Caco-2 (cell line): ENCODE measurements at regions of chr20 and their contacts with region 1.

Region 1: GRCh38 chr20:38472513-38473372 is at the start of gene RALGAPB:
- DNase-seq: peak; percentile 100
- H3K4me3 ChIP-seq: peak within 1 kb of the TSS; percentile 78
- H3K4me3 Mint-ChIP-seq: peak within 1 kb of the TSS; percentile 80
- H3K27ac Mint-ChIP-seq: peak within 1 kb of the TSS; percentile 54
- H3K4me1 ChIP-seq: peaks cover 15% of the 10 kb centered on the region
- H3K4me1 Mint-ChIP-seq: peaks cover 27% of the 10 kb centered on the region
- H3K27me3 ChIP-seq: no peaks in the 10 kb centered on the region
- H3K27me3 Mint-ChIP-seq: no peaks in the 10 kb centered on the region
- CTCF ChIP-seq: peak; percentile 86 to 92
- total RNA-seq, gene RALGAPB: 69.1 and 72.3 TPM in 2 replicates

Region 2: DNA sequence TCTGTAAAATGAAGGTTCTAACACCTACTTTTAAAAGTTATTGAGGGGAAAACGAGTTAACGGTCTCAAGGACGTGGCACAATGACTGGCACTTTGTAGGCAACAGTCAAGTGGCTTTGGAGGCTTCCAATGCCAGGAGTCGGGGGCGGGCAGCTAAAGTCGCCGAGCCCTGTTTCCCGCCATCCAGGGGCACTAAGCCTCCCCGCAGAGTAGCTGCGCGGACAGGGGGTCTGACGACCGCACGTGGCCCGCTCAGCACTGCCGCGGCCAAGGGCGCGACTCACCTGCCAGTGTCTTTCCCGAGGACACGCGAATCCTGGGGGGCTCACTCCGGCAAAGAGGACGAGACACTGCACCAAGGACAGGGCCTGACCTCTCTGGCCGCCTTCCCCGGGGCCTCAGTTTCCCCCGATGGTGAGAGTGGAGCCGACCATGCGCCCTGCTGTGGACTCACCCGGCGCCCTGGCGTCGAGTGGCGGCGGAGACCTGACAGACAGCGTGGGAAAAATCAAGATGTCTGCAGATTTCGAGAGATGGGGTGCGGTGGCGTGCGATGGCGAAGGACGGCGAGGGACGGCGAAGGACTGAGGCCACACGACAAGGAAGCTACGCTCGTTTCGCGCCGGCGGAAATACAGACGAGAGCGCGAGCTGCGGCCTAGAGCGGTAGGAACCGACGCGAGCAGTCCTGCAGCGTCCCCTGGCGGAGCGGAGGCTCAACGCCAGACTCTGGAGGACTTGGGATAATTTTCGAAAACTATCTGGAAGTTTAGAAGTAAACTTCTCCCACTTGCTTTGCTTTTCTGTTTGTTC is 37.8 kb before region 1 on chr20 and contains the start of gene SNHG17:
- CTCF ChIA-PET with region 1: interaction called, 68 read pairs
- POLR2A ChIA-PET with region 1: interaction called, 104 read pairs
- intact Hi-C with region 1: loop called (anchors 1 kb)
- DNase-seq: peak; percentile 97
- H3K4me3 ChIP-seq: peak within 1 kb of the TSS; percentile 73
- H3K4me3 Mint-ChIP-seq: peak within 1 kb of the TSS; percentile 94
- H3K27ac Mint-ChIP-seq: peak within 1 kb of the TSS; percentile 95
- H3K4me1 ChIP-seq: peaks cover 10% of the 10 kb centered on the region
- H3K4me1 Mint-ChIP-seq: peaks cover 16% of the 10 kb centered on the region
- H3K27me3 ChIP-seq: no peaks in the 10 kb centered on the region
- H3K27me3 Mint-ChIP-seq: peaks cover 6% of the 10 kb centered on the region
- CTCF ChIP-seq: peak; percentile 100
- total RNA-seq, gene SNHG17: 351 and 362 TPM in 2 replicates

Region 3: GRCh38 chr20:38446441-38447209 is 26.1 kb before region 1 on chr20:
- CTCF ChIA-PET with region 1: interaction called, 73 read pairs
- POLR2A ChIA-PET with region 1: interaction called, 56 read pairs
- intact Hi-C with region 1: loop called (anchors 1 kb)
- DNase-seq: peak; percentile 96 to 100
- H3K4me3 ChIP-seq: peak overlapping the region; percentile 70
- H3K4me3 Mint-ChIP-seq: peak overlapping the region; percentile 81
- H3K27ac Mint-ChIP-seq: peak overlapping the region; percentile 63
- H3K4me1 ChIP-seq: peaks cover 14% of the 10 kb centered on the region
- H3K4me1 Mint-ChIP-seq: peaks cover 19% of the 10 kb centered on the region
- H3K27me3 ChIP-seq: no peaks in the 10 kb centered on the region
- H3K27me3 Mint-ChIP-seq: peaks cover 6% of the 10 kb centered on the region
- CTCF ChIP-seq: peak; percentile 99 to 100

Region 4: DNA sequence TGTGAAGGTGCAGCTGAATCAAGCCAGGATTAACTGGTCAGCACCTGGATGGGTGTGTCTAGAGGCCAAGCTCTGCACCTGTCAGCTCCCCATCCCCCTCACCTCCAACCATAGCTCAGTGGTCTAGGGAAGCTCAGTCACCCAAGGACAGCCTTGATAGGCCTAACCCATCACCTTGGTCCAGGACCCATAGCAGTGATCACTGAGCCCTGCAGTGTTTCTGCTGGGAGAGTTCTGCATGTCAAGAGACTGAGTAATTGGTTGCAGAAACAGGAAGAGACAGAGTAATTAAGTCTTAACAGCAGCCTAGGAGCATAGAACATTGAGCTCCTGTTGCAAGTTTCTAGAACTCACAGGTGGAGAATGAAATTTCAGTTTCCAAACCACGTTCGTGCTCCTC is 18.8 kb before region 1 on chr20:
- CTCF ChIA-PET with region 1: interaction called, 15 read pairs
- POLR2A ChIA-PET with region 1: interaction called, 7 read pairs
- intact Hi-C with region 1: no loop called
- DNase-seq: peak in 1 of 2 experiments; percentile 38
- H3K4me3 ChIP-seq: no peak overlapping the region
- H3K4me3 Mint-ChIP-seq: no peak overlapping the region
- H3K27ac Mint-ChIP-seq: no peak overlapping the region
- H3K4me1 ChIP-seq: no peaks in the 10 kb centered on the region
- H3K4me1 Mint-ChIP-seq: no peaks in the 10 kb centered on the region
- H3K27me3 ChIP-seq: no peaks in the 10 kb centered on the region
- H3K27me3 Mint-ChIP-seq: peaks cover 4% of the 10 kb centered on the region
- CTCF ChIP-seq: no peak

Region 5: DNA sequence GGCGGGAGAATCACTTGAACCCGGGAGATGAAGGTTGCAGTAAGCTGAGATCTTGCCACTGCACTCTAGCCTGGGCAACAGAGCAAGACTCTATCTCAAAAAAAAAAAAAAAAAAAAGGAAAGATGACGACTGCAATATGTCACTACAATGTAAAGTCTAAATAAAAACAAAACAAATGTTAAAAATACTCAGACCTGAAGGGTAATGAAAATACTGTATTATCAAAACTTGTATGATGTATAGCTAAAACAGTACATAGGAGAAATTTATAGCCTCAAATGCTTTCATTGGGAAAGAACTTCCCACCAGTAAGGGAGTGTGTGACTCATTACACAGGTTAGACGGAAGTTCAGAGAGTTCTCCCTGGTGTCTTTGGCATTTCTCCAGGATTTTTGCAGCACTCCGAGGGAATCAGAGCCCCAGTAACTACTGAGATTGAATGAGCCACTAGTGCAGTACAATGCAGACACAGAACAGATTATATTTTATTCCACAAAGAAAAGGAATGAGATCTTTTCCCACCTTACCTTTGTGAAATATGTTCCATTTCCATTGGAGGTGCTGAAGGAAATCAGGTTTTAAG is 12.6 kb before region 1 on chr20:
- CTCF ChIA-PET with region 1: interaction called, 15 read pairs
- POLR2A ChIA-PET with region 1: interaction called, 7 read pairs
- intact Hi-C with region 1: no loop called
- DNase-seq: peak in 1 of 2 experiments; percentile 47
- H3K4me3 ChIP-seq: no peak overlapping the region; the same call in 1 of the 2 replicates
- H3K4me3 Mint-ChIP-seq: peak overlapping the region; percentile 20
- H3K27ac Mint-ChIP-seq: peak overlapping the region; percentile 48
- H3K4me1 ChIP-seq: peaks cover 6% of the 10 kb centered on the region
- H3K4me1 Mint-ChIP-seq: peaks cover 9% of the 10 kb centered on the region
- H3K27me3 ChIP-seq: no peaks in the 10 kb centered on the region
- H3K27me3 Mint-ChIP-seq: peaks cover 4% of the 10 kb centered on the region
- CTCF ChIP-seq: no peak

Region 6: DNA sequence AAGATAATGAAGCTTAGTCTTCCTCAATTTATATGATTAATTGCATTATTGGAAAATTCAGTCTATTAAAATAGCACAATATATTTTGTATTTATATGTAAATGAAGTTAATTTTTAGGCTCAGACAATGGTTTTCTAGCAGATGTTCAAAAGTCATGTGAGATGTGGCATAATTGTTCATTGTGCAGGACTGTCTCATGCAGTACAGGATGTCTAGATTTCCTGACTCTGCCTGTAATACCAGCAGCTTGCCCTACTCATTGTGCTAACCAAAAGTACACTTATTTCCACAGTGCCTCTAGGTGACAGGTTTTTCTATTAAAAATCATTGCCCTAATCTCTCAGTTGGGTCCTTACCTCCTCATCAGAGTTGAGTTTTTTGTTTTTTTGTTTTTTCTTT is 12.3 kb after region 1 on chr20:
- CTCF ChIA-PET with region 1: interaction called, 13 read pairs
- POLR2A ChIA-PET with region 1: interaction called, 6 read pairs
- intact Hi-C with region 1: no loop called
- DNase-seq: no peak
- H3K4me3 ChIP-seq: no peak overlapping the region
- H3K4me3 Mint-ChIP-seq: no peak overlapping the region
- H3K27ac Mint-ChIP-seq: no peak overlapping the region
- H3K4me1 ChIP-seq: no peaks in the 10 kb centered on the region
- H3K4me1 Mint-ChIP-seq: no peaks in the 10 kb centered on the region
- H3K27me3 ChIP-seq: no peaks in the 10 kb centered on the region
- H3K27me3 Mint-ChIP-seq: no peaks in the 10 kb centered on the region
- CTCF ChIP-seq: no peak

Region 7: DNA sequence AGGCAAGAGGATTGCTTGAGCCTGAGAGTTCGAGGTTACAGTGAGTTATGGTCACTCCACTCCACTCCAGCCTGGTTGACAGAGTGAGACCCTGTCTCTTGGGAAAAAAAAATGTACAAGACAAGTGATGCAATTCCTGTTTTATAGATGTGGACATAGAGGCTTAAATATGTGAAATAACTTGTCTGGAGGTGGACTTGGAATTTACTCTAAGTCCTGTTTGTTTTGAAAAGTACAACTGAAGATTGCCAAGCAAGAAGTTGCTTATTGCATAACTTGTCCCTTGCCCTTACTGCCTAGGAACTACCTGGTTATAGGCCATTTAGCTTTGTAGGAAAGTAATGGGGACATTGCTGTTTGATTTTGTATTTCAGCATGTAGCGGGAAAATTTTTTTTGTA is 82.2 kb after region 1 on chr20:
- CTCF ChIA-PET with region 1: interaction called, 3 read pairs
- POLR2A ChIA-PET with region 1: no interaction called
- intact Hi-C with region 1: loop called (anchors 2 kb)
- DNase-seq: peak in 1 of 2 experiments; percentile 76
- H3K4me3 ChIP-seq: no peak overlapping the region
- H3K4me3 Mint-ChIP-seq: no peak overlapping the region
- H3K27ac Mint-ChIP-seq: no peak overlapping the region
- H3K4me1 ChIP-seq: peaks cover 14% of the 10 kb centered on the region
- H3K4me1 Mint-ChIP-seq: peaks cover 5% of the 10 kb centered on the region
- H3K27me3 ChIP-seq: no peaks in the 10 kb centered on the region
- H3K27me3 Mint-ChIP-seq: no peaks in the 10 kb centered on the region
- CTCF ChIP-seq: no peak

Region 8: GRCh38 chr20:39124064-39124463 is 651.3 kb after region 1 on chr20:
- CTCF ChIA-PET with region 1: no interaction called
- POLR2A ChIA-PET with region 1: no interaction called
- intact Hi-C with region 1: no loop called
- DNase-seq: no peak
- H3K4me3 ChIP-seq: no peak overlapping the region
- H3K4me3 Mint-ChIP-seq: no peak overlapping the region
- H3K27ac Mint-ChIP-seq: no peak overlapping the region
- H3K4me1 ChIP-seq: peaks cover 9% of the 10 kb centered on the region; the same call in 1 of the 2 replicates
- H3K4me1 Mint-ChIP-seq: no peaks in the 10 kb centered on the region
- H3K27me3 ChIP-seq: no peaks in the 10 kb centered on the region
- H3K27me3 Mint-ChIP-seq: peaks cover 16% of the 10 kb centered on the region
- CTCF ChIP-seq: no peak